ENCODE measurements at regions of chr6 and their contacts with region 1.

Region 1: DNA sequence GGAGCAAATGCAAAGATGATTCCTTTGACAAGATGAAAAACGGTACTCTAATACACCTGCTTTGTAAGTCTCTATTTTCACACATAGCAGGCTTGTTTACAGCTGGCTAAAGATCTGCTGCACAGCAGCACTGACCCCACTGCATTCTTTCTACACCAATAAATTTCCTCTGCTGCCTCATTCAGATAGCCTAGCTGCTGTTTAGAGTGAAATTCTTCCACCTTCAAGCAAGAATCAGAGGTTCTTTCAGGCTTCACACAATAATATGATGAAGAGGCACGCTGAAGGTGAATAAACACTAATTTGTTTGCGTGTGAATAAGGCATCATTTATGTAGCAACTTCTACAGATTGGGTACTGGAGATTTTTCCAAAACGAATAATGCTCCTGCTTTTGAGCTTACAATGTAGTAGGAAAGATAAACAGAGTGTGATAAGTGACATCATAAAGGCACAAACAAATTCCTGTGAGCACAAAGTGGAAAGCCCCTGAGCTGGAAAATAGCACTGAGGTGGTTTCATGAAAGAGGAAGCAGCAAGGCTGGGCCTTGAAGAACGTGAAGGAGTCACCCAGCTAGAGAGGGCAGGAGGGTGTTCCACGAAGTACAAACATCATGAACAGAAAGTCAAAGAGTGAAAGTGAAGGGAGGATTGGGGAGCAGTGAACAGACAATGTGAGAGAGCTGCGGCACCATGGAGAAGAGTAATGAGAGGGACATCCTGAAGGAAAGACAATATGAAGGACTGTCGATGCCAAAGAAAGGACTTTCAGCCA is 543.4 kb downstream of the CD83 start:
- DNase-seq: peak; percentile 91
- H3K4me3 Mint-ChIP-seq: no peak overlapping the region
- H3K27ac Mint-ChIP-seq: no peak overlapping the region
- H3K4me1 Mint-ChIP-seq: peaks cover 46% of the 10 kb centered on the region
- H3K27me3 Mint-ChIP-seq: peaks cover 7% of the 10 kb centered on the region

Region 2: GRCh38 chr6:14542670-14543366 is 118.2 kb before region 1 on chr6:
- intact Hi-C with region 1: loop called (anchors 5 kb)
- DNase-seq: peak; percentile 74
- H3K4me3 Mint-ChIP-seq: peak overlapping the region; percentile 17
- H3K27ac Mint-ChIP-seq: peak overlapping the region; percentile 59
- H3K4me1 Mint-ChIP-seq: peaks cover 25% of the 10 kb centered on the region
- H3K27me3 Mint-ChIP-seq: peaks cover 2% of the 10 kb centered on the region

Region 3: DNA sequence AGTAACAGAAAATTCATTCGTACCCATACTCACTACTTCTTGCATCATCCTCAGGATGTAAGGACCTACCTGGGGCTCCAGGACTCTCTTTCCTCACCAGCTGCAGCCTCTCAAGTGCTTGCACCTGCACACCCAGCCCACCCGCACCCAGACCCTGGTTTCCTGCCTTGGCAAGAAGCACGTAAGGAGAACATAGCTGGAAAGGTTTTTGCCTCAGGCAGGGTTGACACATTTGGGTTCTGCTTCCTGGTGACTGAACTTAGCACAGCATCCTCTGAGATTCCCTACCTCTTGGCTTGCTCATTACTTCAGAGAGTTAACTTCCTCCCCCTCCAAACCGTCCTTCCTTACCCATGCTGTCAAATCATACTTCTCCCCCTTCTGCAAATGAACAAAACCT is 13.5 kb after region 1 on chr6:
- intact Hi-C with region 1: loop called (anchors 1 kb)
- DNase-seq: no peak
- H3K4me3 Mint-ChIP-seq: no peak overlapping the region
- H3K27ac Mint-ChIP-seq: no peak overlapping the region
- H3K4me1 Mint-ChIP-seq: peaks cover 27% of the 10 kb centered on the region
- H3K27me3 Mint-ChIP-seq: peaks cover 9% of the 10 kb centered on the region

Region 4: GRCh38 chr6:14743465-14744211 is 82.6 kb after region 1 on chr6:
- intact Hi-C with region 1: loop called (anchors 5 kb)
- DNase-seq: peak; percentile 90
- H3K4me3 Mint-ChIP-seq: peak overlapping the region; percentile 30
- H3K27ac Mint-ChIP-seq: peak overlapping the region; percentile 98
- H3K4me1 Mint-ChIP-seq: peaks cover 74% of the 10 kb centered on the region
- H3K27me3 Mint-ChIP-seq: no peaks in the 10 kb centered on the region

Region 5: GRCh38 chr6:14770572-14770971 is 109.6 kb after region 1 on chr6:
- intact Hi-C with region 1: no loop called
- DNase-seq: no peak
- H3K4me3 Mint-ChIP-seq: no peak overlapping the region
- H3K27ac Mint-ChIP-seq: no peak overlapping the region
- H3K4me1 Mint-ChIP-seq: peaks cover 4% of the 10 kb centered on the region
- H3K27me3 Mint-ChIP-seq: no peaks in the 10 kb centered on the region

Measured in activated CD4-positive, alpha-beta T cell treated with anti-CD3 and anti-CD28 coated beads, Interleukin-2, amount 10 ng/mL, durations not matched to agents 24 days and 14 days (primary cell).